Sigmoid colon (tissue), 7 donors: ENCODE measurements at regions of chr19 and their contacts with region 1.

Region 1: GRCh38 chr19:4267101-4267900 is 11.8 kb upstream of the SHD start:
- DNase-seq: no peak
- H3K4me3 ChIP-seq: no peak overlapping the region
- H3K27ac ChIP-seq: no peak overlapping the region
- H3K4me1 ChIP-seq: no peaks in the 10 kb centered on the region
- H3K27me3 ChIP-seq: no peaks in the 10 kb centered on the region
- CTCF ChIP-seq: peak in 3 of 4 experiments; percentile 66 to 85 (median 76)
- EP300 ChIP-seq: no peak
- POLR2A ChIP-seq: no peak

Region 2: GRCh38 chr19:4352701-4353121 is 85.4 kb after region 1 on chr19:
- intact Hi-C with region 1: loop called (anchors 2 kb)
- DNase-seq: peak; percentile 71
- H3K4me3 ChIP-seq: no peak overlapping the region
- H3K27ac ChIP-seq: no peak overlapping the region
- H3K4me1 ChIP-seq: no peaks in the 10 kb centered on the region
- H3K27me3 ChIP-seq: no peaks in the 10 kb centered on the region
- CTCF ChIP-seq: peak; percentile 78 to 93 (median 86)
- EP300 ChIP-seq: no peak
- POLR2A ChIP-seq: no peak